A549 (cell line): ENCODE measurements at regions of chr1 and their contacts with region 1.

Region 1: GRCh38 chr1:88973520-88974137 is 18.8 kb downstream of the KYAT3 start:
- DNase-seq: peak; percentile 6 to 25
- ATAC-seq: peak in 1 of 2 experiments; percentile 60; a peak in 3 of 6 replicates
- H3K4me3 ChIP-seq: no peak overlapping the region
- H3K27ac ChIP-seq: no peak overlapping the region
- H3K4me1 ChIP-seq: no peaks in the 10 kb centered on the region
- CTCF ChIP-seq: peak; percentile 52
- EP300 ChIP-seq: no peak
- POLR2A ChIP-seq: no peak
- RAD21 ChIP-seq: peak; percentile 46 to 55; a peak in 4 of 5 replicates

Region 2: DNA sequence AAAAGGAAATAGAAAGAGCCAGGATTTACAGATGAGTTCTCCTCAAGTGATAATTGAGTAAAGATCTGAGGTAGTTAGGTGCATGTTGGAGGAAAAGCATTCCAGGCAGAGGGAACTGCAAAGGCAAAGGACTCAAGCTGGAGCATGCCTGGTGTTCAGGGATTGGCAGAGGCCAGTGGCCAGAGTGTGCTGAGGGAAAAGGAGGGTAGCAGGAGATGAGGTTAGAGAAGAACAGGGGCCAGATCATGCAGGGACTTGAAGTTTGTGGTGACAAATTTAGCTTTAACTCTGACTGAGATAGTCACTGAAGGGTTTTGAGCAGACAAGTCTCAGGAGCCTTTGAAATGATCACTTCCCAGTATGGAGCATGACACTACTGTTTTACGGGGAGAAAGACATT is 63.2 kb before region 1 on chr1:
- CTCF ChIA-PET with region 1: no interaction called
- POLR2A ChIA-PET with region 1: no interaction called
- DNase-seq: no peak
- ATAC-seq: no peak
- H3K4me3 ChIP-seq: no peak overlapping the region
- H3K27ac ChIP-seq: no peak overlapping the region
- H3K4me1 ChIP-seq: no peaks in the 10 kb centered on the region
- CTCF ChIP-seq: no peak
- EP300 ChIP-seq: no peak
- POLR2A ChIP-seq: no peak
- RAD21 ChIP-seq: no peak

Region 3: DNA sequence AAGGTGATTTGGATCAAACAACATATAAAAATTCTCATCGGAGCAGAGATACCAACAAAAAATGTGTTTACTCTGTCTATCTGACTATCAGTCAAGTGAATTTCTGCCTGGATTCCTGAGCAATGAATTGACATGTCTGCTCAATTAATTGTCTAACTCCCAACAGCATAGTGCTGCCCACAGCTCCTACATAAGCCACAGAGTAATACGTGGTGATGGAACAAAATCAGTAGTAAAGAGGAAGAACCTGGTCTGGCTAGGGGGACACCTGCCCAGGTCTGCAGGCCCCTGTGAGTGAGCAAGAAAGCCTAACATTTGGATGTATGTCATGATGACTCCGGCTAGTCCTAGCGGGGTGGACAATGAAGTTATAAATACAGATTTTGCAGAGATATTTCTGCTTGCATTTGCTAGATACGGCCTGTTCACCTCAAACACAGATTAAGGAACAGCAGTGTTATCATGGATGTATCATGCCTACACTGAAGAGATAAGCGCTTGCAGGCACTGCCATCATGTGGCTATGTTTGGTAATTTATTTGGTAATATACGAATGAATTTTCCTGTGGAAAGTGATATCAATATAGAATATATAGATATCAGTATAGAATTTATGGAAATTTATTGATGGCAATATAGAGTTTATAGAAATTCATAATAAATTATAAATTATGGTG is 481.4 kb after region 1 on chr1:
- CTCF ChIA-PET with region 1: interaction called, 13 read pairs
- POLR2A ChIA-PET with region 1: no interaction called
- DNase-seq: peak; percentile 21 to 38
- ATAC-seq: peak; percentile 76 to 84; a peak in 5 of 6 replicates
- H3K4me3 ChIP-seq: no peak overlapping the region
- H3K27ac ChIP-seq: no peak overlapping the region
- H3K4me1 ChIP-seq: no peaks in the 10 kb centered on the region
- CTCF ChIP-seq: peak; percentile 62
- EP300 ChIP-seq: no peak
- POLR2A ChIP-seq: no peak
- RAD21 ChIP-seq: peak; percentile 70 to 72